ENCODE measurements at regions of chr11 and their contacts with region 1.

Region 1: GRCh38 chr11:9757809-9758636 is 94.1 kb downstream of the SWAP70 start:
- DNase-seq: peak; percentile 95
- H3K4me3 Mint-ChIP-seq: peak overlapping the region; percentile 75
- H3K27ac Mint-ChIP-seq: peak overlapping the region; percentile 79
- H3K4me1 Mint-ChIP-seq: peaks cover 34% of the 10 kb centered on the region
- H3K27me3 Mint-ChIP-seq: no peaks in the 10 kb centered on the region

Region 2: GRCh38 chr11:9314291-9315036 is 443.6 kb before region 1 on chr11 and contains the start of gene TMEM41B:
- CTCF ChIA-PET with region 1: no interaction called
- POLR2A ChIA-PET with region 1: no interaction called
- intact Hi-C with region 1: loop called (anchors 5 kb)
- DNase-seq: peak; percentile 99
- H3K4me3 Mint-ChIP-seq: peak within 1 kb of the TSS; percentile 97
- H3K27ac Mint-ChIP-seq: peak within 1 kb of the TSS; percentile 95
- H3K4me1 Mint-ChIP-seq: peaks cover 33% of the 10 kb centered on the region
- H3K27me3 Mint-ChIP-seq: peaks cover 10% of the 10 kb centered on the region
- total RNA-seq, gene TMEM41B: 33.6 to 36.1 TPM

Region 3: DNA sequence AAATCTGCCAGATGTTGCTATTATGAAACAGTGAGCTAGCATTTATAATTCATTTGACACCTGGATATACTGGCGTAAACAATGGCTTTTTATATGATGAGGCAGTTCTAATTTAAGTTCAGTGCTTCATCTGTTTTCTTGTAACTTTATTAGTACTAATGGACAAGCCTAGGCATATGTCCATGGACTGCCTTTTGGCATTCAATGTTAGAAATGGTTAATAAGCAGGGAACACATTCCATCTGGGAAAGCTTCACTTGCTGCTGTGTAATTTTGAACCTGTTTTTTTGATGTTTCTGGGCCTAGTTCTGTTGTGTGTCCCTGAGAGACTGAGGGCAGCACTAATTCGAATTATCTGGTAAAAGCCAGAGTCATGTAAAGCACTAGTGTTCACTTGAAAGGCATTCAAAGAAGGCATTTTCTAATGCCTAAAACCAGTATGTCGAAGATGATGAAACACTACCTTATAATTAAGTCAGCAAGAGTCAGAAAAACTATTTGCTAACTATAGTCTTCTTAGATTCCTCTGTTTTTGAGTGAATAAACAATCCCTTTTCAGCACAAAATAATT is 44.4 kb after region 1 on chr11:
- CTCF ChIA-PET with region 1: no interaction called
- POLR2A ChIA-PET with region 1: no interaction called
- intact Hi-C with region 1: no loop called
- DNase-seq: no peak
- H3K4me3 Mint-ChIP-seq: no peak overlapping the region
- H3K27ac Mint-ChIP-seq: no peak overlapping the region
- H3K4me1 Mint-ChIP-seq: peaks cover 4% of the 10 kb centered on the region
- H3K27me3 Mint-ChIP-seq: no peaks in the 10 kb centered on the region

Region 4: DNA sequence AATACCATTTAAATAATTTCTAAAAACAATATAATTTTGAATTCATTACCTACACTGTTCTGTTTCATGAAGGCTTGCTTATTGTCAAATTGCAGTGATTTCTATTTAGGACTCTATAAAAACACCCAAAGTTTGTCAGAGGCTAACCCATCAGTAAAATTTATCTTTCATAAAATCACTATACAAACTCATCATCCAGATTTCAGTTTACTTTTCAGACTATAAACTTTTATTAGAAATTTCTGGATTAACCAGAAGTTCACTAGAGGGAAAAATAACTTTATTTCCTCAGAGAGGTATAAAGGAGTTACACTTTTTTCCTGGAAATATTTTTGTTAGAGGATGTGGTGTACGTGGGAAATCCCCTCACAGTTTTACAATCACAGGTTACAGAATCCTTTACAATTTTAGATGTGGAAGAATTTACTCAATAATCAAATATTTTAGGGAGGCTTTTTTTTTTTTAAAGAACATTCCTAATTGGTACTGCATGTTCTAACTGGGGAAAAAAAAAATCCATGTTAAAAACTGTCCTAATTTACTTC is 82.5 kb after region 1 on chr11:
- CTCF ChIA-PET with region 1: interaction called, 4 read pairs
- POLR2A ChIA-PET with region 1: interaction called, 4 read pairs
- intact Hi-C with region 1: loop called (anchors 5 kb)
- DNase-seq: no peak
- H3K4me3 Mint-ChIP-seq: no peak overlapping the region
- H3K27ac Mint-ChIP-seq: no peak overlapping the region
- H3K4me1 Mint-ChIP-seq: peaks cover 35% of the 10 kb centered on the region
- H3K27me3 Mint-ChIP-seq: no peaks in the 10 kb centered on the region

Region 5: DNA sequence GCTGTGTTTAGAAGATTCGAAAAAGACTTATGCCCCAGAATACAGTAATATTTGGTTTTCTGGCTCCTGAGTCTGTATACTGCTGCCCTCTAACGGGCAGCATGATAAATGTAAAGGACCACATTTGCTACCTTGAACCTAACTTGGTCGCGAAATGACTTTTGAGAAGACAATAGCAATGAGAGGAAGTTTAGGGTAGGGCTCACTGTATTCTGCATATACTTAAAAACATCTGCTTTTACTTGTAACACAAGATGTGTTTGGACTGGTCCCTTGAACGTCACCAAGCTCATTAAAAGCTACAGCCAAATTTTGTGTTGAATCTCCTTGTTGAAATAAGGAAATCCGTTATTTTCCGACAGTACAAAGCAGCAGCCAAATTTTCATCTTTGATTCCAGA is 215.0 kb after region 1 on chr11:
- CTCF ChIA-PET with region 1: interaction called, 39 read pairs
- POLR2A ChIA-PET with region 1: interaction called, 4 read pairs
- intact Hi-C with region 1: loop called (anchors 1 kb)
- DNase-seq: peak; percentile 28
- H3K4me3 Mint-ChIP-seq: no peak overlapping the region
- H3K27ac Mint-ChIP-seq: no peak overlapping the region
- H3K4me1 Mint-ChIP-seq: no peaks in the 10 kb centered on the region
- H3K27me3 Mint-ChIP-seq: no peaks in the 10 kb centered on the region

Region 6: DNA sequence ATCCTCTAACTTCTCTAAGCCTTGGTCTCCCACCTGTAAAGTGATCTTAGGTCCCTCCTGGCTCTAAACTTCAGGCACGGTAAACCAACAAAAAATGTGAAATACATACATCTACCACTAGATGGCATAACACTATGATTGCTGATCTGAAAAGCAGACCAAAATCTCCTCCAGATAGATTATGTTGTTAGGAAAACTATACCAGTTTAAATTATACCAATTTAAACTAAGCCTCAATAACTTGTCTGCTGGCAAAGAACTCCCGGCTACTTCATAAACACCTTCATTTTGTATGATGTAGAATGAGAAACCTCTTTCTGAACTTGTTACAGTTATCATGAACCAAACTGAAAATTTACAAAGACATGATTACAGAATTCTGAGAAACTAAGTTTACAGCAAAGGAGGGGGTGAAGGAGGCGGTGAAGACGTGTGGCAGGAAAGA is 450.1 kb after region 1 on chr11:
- CTCF ChIA-PET with region 1: interaction called, 3 read pairs
- POLR2A ChIA-PET with region 1: no interaction called
- intact Hi-C with region 1: loop called (anchors 5 kb)
- DNase-seq: no peak
- H3K4me3 Mint-ChIP-seq: no peak overlapping the region
- H3K27ac Mint-ChIP-seq: no peak overlapping the region
- H3K4me1 Mint-ChIP-seq: no peaks in the 10 kb centered on the region
- H3K27me3 Mint-ChIP-seq: no peaks in the 10 kb centered on the region

Region 7: DNA sequence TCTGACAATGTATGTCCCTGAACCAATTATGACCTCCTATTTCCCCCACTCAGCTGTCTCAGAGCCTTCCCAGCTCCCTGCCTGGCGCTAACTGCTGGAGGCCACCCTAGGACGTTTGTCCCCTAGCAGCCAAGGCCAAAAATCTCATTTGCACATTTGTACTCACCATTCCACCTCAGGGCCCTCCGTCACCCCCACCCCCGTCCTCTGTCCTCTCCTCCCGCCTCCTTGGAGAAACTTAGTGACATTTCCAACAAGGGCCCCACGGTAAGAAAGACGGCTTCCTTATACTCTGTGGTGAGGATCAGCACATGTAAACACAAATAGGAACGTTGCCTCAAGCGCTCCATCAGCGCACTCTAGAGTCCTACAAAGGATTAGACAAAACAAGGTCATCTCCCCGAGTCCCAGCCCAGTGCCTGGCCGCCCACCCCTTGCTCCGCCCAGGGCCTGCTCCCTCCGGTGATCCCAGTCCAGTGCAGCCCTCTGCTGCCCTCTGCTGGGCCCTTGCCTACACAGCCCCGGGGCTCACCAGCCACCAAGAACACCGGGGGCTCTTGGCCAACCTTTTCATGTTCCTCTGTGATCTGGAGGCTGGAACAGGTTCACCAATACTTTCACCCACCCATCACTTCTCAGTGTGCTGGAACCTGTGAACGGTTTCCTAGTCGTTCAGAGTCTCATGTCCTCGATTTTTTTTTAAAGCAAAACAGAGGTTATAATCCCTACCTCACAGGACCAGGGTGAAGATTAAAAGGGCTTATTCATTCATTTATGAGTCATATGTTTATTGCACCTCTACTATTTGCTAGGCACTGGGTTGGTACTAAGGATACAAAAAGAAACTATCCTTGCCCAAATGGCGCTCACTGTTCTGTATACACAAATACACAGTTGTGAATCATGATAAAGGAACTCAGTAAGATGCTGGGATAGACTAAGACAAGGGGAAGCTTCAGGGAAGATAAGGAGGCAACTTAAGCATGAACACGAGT is 977.8 kb after region 1 on chr11:
- CTCF ChIA-PET with region 1: no interaction called
- POLR2A ChIA-PET with region 1: no interaction called
- intact Hi-C with region 1: loop called (anchors 5 kb)
- DNase-seq: peak; percentile 92
- H3K4me3 Mint-ChIP-seq: peak overlapping the region; percentile 53
- H3K27ac Mint-ChIP-seq: no peak overlapping the region
- H3K4me1 Mint-ChIP-seq: peaks cover 11% of the 10 kb centered on the region
- H3K27me3 Mint-ChIP-seq: peaks cover 2% of the 10 kb centered on the region